MCF 10A (cell line): ENCODE measurements at regions of chr20 and their contacts with region 1.

Region 1: GRCh38 chr20:50460460-50461267 is 49.5 kb upstream of the PTPN1 start:
- DNase-seq: peak; percentile 91
- H3K4me3 Mint-ChIP-seq: peak overlapping the region; percentile 32
- H3K27ac Mint-ChIP-seq: peak overlapping the region; percentile 84
- H3K4me1 Mint-ChIP-seq: peaks cover 23% of the 10 kb centered on the region
- H3K27me3 Mint-ChIP-seq: no peaks in the 10 kb centered on the region
- CTCF ChIP-seq: peak; percentile 94

Region 2: DNA sequence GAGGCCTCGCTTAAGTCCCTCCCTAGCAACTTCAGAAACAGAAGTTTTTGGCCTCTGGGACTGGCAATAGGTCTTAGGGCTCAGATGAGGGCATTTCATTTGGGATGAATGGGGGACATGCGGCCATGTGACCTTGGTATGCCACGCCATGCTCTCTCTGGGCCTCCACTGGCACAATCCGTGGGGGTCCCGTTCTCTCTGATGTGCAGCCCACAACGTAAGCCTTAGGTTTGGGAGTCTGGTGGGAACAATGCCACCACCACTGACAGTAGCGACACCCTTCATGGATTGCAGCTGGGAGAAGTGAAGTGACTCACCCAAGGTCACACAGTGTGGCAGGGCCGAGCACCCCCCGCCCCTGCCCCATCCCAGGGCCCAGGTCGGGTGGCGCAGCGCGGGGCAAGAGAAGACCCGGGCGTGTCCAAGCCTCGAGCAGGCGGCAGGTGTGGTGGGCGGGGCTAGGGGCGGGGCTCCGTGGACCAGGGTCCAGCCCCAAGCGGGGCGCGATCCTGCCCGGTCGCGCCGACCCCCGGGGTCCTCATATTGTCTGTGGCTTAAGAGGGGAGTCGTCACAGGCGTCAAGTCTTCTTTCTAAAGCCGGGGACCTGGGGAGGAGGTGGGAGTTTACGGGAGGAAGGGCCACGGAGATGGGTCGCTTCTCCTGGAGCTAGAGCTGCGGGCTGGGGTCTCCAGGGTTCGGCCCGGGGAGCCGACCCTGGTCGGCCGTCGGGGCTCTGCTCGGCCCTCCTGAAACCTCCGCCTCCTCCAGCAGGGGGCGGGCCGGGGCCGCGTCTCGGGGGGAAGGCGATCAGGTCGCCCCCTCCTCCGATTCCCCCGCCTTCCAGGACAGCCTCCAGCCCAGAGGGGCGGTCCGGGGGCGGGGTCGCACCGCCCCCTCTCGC is 270.7 kb before region 1 on chr20:
- CTCF ChIA-PET with region 1: interaction called, 295 read pairs
- POLR2A ChIA-PET with region 1: interaction called, 64 read pairs
- intact Hi-C with region 1: loop called (anchors 1 kb)
- DNase-seq: peak; percentile 85
- H3K4me3 Mint-ChIP-seq: peak overlapping the region; percentile 90
- H3K27ac Mint-ChIP-seq: no peak overlapping the region
- H3K4me1 Mint-ChIP-seq: peaks cover 35% of the 10 kb centered on the region
- H3K27me3 Mint-ChIP-seq: no peaks in the 10 kb centered on the region
- CTCF ChIP-seq: peak; percentile 69

Region 3: DNA sequence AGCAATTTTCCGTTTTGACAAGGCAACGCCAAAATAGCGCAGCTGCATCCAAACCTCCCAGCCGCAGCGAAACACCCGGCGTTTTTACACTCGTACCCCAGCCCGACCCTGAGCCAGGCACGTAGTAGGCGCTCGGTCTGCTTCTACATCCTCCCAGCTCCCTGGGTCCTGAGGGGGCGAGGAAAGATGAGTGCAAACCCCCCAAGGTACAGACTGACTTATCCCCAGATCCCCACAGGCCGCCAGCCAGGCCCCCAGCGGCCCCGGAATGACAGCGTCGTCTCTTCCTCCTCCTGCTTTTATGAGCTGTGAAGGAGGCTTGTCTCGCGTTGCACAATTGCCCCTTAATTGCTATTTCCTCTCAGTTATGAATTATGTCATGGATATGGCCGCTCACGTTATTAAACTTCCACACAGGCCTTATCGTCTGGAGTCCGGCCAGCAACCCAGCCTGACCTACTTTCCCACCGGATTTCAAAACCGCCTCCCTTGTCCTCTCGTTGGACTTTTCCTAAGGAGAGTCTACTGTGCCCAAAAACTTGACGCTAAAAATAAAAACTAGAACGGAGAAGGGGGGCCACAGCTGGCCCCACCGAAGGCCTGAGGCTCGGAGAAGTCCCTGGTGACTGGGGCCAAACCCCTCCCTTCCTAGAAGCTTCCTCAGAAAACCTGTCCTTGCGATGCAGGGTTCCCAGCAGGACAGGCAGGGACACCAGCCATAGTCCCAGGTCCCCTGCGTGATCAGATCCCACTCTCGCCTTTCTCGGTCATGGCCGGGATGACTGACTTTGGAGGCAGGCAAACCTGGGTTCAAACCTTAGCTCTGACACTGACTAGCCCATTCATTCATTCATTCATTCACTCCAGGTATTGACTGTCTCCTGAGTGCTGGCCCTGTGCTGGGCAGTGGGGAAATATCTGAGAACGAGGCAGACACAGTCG is 81.3 kb before region 1 on chr20:
- CTCF ChIA-PET with region 1: interaction called, 4 read pairs
- POLR2A ChIA-PET with region 1: interaction called, 4 read pairs
- intact Hi-C with region 1: loop called (anchors 5 kb)
- DNase-seq: peak; percentile 91
- H3K4me3 Mint-ChIP-seq: no peak overlapping the region
- H3K27ac Mint-ChIP-seq: no peak overlapping the region
- H3K4me1 Mint-ChIP-seq: peaks cover 42% of the 10 kb centered on the region
- H3K27me3 Mint-ChIP-seq: no peaks in the 10 kb centered on the region
- CTCF ChIP-seq: no peak

Region 4: DNA sequence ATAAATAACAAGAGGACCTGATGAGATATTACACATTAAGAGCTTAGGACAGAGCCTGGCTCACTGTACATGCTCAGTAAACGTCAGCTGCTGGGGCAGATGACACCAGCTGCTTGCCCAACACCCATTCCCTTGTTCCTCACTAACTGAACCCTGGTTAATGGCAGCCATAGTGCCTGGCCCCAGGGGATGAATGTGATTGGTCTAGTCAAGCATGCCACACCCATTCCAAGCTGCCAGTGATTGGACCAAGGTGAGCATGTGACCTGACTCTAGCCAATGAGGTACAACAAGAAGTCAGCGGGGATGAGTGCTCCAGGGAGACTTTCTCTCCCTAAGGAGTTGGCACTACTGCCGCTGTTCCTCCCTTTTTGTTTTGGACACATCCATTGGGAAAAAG is 35.6 kb before region 1 on chr20:
- CTCF ChIA-PET with region 1: interaction called, 26 read pairs
- POLR2A ChIA-PET with region 1: interaction called, 17 read pairs
- intact Hi-C with region 1: no loop called
- DNase-seq: no peak
- H3K4me3 Mint-ChIP-seq: no peak overlapping the region
- H3K27ac Mint-ChIP-seq: peak overlapping the region; percentile 92
- H3K4me1 Mint-ChIP-seq: peaks cover 48% of the 10 kb centered on the region
- H3K27me3 Mint-ChIP-seq: no peaks in the 10 kb centered on the region
- CTCF ChIP-seq: no peak

Region 5: GRCh38 chr20:50484276-50484976 is 23.8 kb after region 1 on chr20:
- CTCF ChIA-PET with region 1: interaction called, 27 read pairs
- POLR2A ChIA-PET with region 1: interaction called, 6 read pairs
- intact Hi-C with region 1: no loop called
- DNase-seq: peak; percentile 30
- H3K4me3 Mint-ChIP-seq: peak overlapping the region; percentile 75
- H3K27ac Mint-ChIP-seq: peak overlapping the region; percentile 90
- H3K4me1 Mint-ChIP-seq: peaks cover 12% of the 10 kb centered on the region
- H3K27me3 Mint-ChIP-seq: no peaks in the 10 kb centered on the region
- CTCF ChIP-seq: peak; percentile 29

Region 6: DNA sequence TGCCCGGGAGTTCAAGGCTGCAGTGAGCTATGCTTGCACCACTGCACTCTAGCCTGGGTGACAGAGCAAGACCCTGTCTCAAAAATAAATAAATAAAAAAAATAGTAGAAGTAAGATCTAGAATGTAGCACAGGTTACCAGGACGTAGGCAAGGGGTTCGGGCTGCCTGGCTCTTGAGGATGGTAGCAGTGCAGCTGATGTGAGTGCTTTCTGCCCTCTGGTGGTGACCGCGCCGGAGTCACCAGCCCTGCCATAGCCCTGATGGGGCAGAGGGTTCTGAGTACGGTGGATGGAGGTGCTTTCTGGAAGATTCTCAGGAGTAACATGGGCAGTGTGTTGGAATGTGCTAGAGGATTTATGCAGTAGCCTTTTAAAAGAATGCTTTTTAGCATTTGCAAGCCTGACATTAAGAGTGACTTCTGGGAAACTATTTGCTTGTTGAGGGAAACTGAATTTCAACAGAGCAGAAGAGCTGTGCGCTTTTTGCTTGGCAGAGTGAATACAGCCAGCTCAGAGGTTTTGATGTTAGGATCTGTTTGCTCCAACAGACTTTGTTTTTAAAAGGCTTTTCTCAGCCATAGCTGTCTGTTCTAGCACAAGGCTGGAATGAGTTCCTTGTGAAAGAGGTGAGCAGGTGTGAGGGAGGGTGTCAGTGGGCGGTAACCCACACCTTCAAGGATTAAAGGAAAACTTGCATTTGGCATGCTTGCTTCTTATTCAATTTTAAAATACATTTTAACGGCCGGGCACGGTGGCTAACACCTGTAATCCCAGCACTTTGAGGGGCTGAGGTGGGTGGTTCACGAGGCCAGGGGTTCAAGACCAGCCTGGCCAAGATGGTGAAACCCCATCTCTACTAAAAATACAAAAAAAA is 115.4 kb after region 1 on chr20:
- CTCF ChIA-PET with region 1: interaction called, 40 read pairs
- POLR2A ChIA-PET with region 1: interaction called, 3 read pairs
- intact Hi-C with region 1: no loop called
- DNase-seq: peak; percentile 63
- H3K4me3 Mint-ChIP-seq: no peak overlapping the region
- H3K27ac Mint-ChIP-seq: no peak overlapping the region
- H3K4me1 Mint-ChIP-seq: peaks cover 21% of the 10 kb centered on the region
- H3K27me3 Mint-ChIP-seq: no peaks in the 10 kb centered on the region
- CTCF ChIP-seq: peak; percentile 56